ENCODE measurements at regions of chr1 and their contacts with region 1.

Region 1: DNA sequence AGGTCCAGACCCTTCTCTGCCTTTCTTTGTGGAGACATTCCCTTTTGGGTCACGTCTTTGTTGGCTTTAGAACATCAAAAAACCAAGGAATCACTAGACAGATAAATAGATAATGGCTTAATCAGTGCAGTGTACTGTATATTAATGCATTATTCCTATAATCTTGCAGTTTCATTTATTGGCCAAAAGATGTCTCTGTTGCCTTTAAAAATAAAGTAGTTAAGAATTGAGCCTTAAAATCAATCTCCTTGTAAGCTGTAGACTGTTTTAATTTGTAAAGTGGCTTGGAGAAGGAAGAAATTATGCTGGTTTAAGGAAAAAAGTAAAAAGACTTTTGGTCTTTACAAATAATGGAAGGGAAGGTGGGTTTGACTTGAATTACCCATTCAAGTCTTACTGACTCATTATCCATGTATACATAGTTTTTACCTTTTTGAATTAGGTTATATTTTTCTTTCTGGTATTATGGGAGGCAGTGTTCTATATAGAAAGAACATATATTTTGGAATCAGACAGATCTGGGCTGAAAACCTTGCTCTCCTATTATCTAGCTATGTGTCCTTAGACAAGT is 84.6 kb downstream of the VPS13D start:
- DNase-seq: peak in 2 of 9 experiments; percentile 19 to 34
- ATAC-seq: peak; percentile 36
- H3K4me3 ChIP-seq: no peak overlapping the region
- H3K4me3 Mint-ChIP-seq: no peak overlapping the region
- H3K27ac ChIP-seq: no peak overlapping the region
- H3K27ac Mint-ChIP-seq: no peak overlapping the region
- H3K4me1 ChIP-seq: no peaks in the 10 kb centered on the region
- H3K4me1 Mint-ChIP-seq: no peaks in the 10 kb centered on the region
- H3K27me3 ChIP-seq: no peaks in the 10 kb centered on the region
- H3K27me3 Mint-ChIP-seq: no peaks in the 10 kb centered on the region
- CTCF ChIP-seq: peak; percentile 73

Region 2: GRCh38 chr1:10324627-10325026 is 1989.8 kb before region 1 on chr1:
- CTCF ChIA-PET with region 1: no interaction called
- POLR2A ChIA-PET with region 1: no interaction called
- intact Hi-C with region 1: no loop called
- DNase-seq: peak in 4 of 9 experiments; percentile 11 to 35 (median 32)
- ATAC-seq: no peak
- H3K4me3 ChIP-seq: no peak overlapping the region
- H3K4me3 Mint-ChIP-seq: peak overlapping the region; percentile 40
- H3K27ac ChIP-seq: peak overlapping the region in 1 of 2 experiments; percentile 3
- H3K27ac Mint-ChIP-seq: peak overlapping the region; percentile 42
- H3K4me1 ChIP-seq: no peaks in the 10 kb centered on the region
- H3K4me1 Mint-ChIP-seq: no peaks in the 10 kb centered on the region
- H3K27me3 ChIP-seq: no peaks in the 10 kb centered on the region
- H3K27me3 Mint-ChIP-seq: no peaks in the 10 kb centered on the region
- CTCF ChIP-seq: no peak

Region 3: GRCh38 chr1:12301518-12302237 is 12.7 kb before region 1 on chr1:
- CTCF ChIA-PET with region 1: interaction called, 11 read pairs
- POLR2A ChIA-PET with region 1: no interaction called
- intact Hi-C with region 1: no loop called
- DNase-seq: no peak
- ATAC-seq: no peak
- H3K4me3 ChIP-seq: no peak overlapping the region
- H3K4me3 Mint-ChIP-seq: no peak overlapping the region
- H3K27ac ChIP-seq: no peak overlapping the region
- H3K27ac Mint-ChIP-seq: no peak overlapping the region
- H3K4me1 ChIP-seq: no peaks in the 10 kb centered on the region
- H3K4me1 Mint-ChIP-seq: no peaks in the 10 kb centered on the region
- H3K27me3 ChIP-seq: no peaks in the 10 kb centered on the region
- H3K27me3 Mint-ChIP-seq: no peaks in the 10 kb centered on the region
- CTCF ChIP-seq: no peak

Region 4: DNA sequence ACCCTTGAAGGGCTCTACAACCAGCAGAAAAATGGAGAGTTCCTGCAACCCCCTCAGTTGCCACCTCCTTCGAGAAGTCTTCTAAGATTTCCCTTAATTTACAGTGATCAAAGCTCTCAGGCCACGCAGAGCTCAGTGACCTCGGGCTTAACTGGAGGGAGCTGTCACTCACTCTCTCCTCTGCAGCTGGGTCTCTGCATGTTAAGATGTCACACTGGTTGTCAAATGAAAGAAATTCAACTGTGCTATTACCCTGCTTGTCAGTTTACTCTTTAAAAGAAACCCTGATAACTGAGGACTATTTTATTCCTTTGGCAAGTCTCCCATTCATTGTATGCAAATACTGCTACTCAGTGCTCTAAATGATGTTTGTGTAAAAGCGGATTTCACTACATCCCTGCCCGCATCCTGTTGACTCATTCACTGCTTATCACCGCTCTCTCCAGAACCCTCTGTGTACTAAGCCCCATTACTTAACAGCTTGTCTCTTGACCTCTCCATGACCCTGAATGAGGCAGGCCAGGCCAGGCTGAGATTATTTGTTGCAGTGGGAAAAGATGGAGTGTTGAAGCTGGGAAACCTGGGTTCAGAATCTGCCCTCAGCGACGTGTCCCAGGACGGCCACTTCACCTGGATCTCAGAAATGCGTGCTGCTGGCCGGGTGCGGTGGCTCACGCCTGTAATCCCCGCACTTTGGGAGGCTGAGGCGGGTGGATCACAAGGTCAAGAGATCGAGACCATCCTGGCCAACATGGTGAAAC is 289.9 kb after region 1 on chr1:
- CTCF ChIA-PET with region 1: interaction called, 10 read pairs
- POLR2A ChIA-PET with region 1: no interaction called
- intact Hi-C with region 1: no loop called
- DNase-seq: peak in 8 of 9 experiments; percentile 47 to 87 (median 72)
- ATAC-seq: peak; percentile 91
- H3K4me3 ChIP-seq: no peak overlapping the region
- H3K4me3 Mint-ChIP-seq: peak overlapping the region; percentile 50
- H3K27ac ChIP-seq: peak overlapping the region; percentile 22 to 59
- H3K27ac Mint-ChIP-seq: peak overlapping the region; percentile 95
- H3K4me1 ChIP-seq: peaks cover 36% of the 10 kb centered on the region
- H3K4me1 Mint-ChIP-seq: peaks cover 63% of the 10 kb centered on the region
- H3K27me3 ChIP-seq: no peaks in the 10 kb centered on the region
- H3K27me3 Mint-ChIP-seq: no peaks in the 10 kb centered on the region
- CTCF ChIP-seq: no peak

Measured in CD8-positive, alpha-beta T cell (primary cell).